Heart left ventricle (tissue), 16 donors: ENCODE measurements at regions of chr2 and their contacts with region 1.

Region 1: DNA sequence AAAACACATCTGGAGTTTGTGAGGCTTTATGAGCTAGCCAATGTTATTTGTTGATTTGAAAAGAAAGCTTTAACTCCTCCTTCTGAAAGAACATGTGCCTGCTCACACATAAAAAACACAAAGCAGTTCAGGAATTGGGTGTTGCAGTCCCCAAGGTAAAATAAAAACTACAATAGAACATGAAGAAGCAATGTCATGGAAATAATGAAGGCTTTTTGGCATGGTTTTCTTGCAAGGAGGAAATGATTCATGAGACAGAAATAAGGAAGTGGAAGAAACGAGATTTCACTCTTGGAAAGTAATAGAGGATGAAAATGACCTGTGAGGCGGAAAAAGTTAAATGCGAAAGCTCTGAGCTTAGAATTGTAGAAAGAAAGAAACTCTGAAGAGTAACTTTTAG is 81.1 kb downstream of the TRIB2 start:
- DNase-seq: no peak
- ATAC-seq: peak; percentile 28 to 81 (median 73)
- H3K4me3 ChIP-seq: no peak overlapping the region
- H3K27ac ChIP-seq: peak overlapping the region in 11 of 12 donors; percentile 31 to 80 (median 64)
- H3K4me1 ChIP-seq: peaks cover 0 to 27% (median 6%) of the 10 kb centered on the region in 12 donors
- H3K27me3 ChIP-seq: no peaks in the 10 kb centered on the region
- CTCF ChIP-seq: no peak
- POLR2A ChIP-seq: no peak

Region 2: GRCh38 chr2:12261986-12262680 is 535.7 kb before region 1 on chr2:
- intact Hi-C with region 1: no loop called
- DNase-seq: no peak
- ATAC-seq: no peak
- H3K4me3 ChIP-seq: no peak overlapping the region
- H3K27ac ChIP-seq: peak overlapping the region in 4 of 12 donors; percentile 7 to 43 (median 19)
- H3K4me1 ChIP-seq: peaks cover 0 to 33% (median 13%) of the 10 kb centered on the region in 12 donors
- H3K27me3 ChIP-seq: no peaks in the 10 kb centered on the region
- CTCF ChIP-seq: no peak
- POLR2A ChIP-seq: no peak

Region 3: DNA sequence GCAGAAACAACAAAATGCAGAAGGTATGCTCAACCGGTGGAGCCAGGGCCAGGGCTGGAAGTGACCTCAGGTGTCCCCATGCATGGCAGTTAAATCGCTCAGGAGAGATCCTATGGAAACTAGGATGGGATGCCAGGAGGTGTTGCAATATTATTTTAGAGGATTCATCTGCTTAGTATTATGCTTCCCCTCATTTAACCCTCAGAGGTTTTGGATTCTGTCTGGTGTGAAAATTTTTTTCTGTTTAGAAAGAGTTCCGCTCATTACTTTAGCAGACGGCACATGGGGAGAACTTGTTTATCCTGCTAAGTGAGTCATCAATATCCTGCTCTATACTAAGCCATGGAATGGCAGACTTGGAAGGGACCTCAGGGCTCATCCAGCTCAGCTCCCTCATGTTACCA is 38.6 kb before region 1 on chr2:
- intact Hi-C with region 1: loop called in 2 of 10 experiments (anchors 2 to 5 kb)
- DNase-seq: no peak
- ATAC-seq: peak in 3 of 4 donors; percentile 60 to 75 (median 70)
- H3K4me3 ChIP-seq: no peak overlapping the region
- H3K27ac ChIP-seq: peak overlapping the region in 4 of 12 donors; percentile 19 to 52 (median 39)
- H3K4me1 ChIP-seq: peaks cover 0 to 34% (median 16%) of the 10 kb centered on the region in 12 donors
- H3K27me3 ChIP-seq: no peaks in the 10 kb centered on the region
- CTCF ChIP-seq: no peak
- POLR2A ChIP-seq: no peak